Activated naive CD8-positive, alpha-beta T cell treated with anti-CD3 and anti-CD28 coated beads, Interleukin-2, amount 10 ng/mL, durations not matched to agents 7 days and 5 days (primary cell): ENCODE measurements at regions of chr2 and their contacts with region 1.

Region 1: DNA sequence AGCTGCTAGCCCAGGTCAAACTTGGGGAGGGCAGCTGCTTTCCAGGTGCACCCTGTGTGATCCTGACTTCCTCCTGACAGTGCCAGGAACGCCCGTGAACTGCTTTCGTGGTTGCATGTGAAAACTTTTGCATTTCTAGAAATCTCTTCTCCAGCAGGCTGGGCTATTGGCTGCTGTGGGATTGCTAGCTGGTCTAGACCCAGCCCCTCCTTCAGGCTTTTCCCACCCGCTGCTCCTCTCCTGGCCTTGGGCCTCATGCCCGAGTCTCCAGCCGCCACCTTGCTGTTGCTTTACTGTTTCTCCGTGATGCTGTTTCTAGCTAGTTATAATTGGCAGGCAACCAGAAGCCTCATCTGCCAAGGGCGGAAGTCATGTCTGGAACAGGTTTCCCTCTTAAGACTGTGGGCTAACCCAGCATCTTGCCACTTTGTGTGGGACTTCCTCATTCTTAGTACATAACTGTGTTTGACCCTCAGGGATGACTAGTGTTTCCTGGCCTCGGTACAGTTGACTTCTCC is 27.0 kb upstream of the MGAT4A start:
- DNase-seq: peak; percentile 56
- ATAC-seq: peak; percentile 92
- H3K4me3 Mint-ChIP-seq: peak overlapping the region; percentile 81
- H3K27ac Mint-ChIP-seq: peak overlapping the region; percentile 94
- H3K4me1 Mint-ChIP-seq: peaks cover 42% of the 10 kb centered on the region
- H3K27me3 Mint-ChIP-seq: no peaks in the 10 kb centered on the region

Region 2: GRCh38 chr2:98664327-98664726 is 93.6 kb before region 1 on chr2:
- POLR2A ChIA-PET with region 1: interaction called, 10 read pairs
- DNase-seq: no peak
- ATAC-seq: peak; percentile 65
- H3K4me3 Mint-ChIP-seq: peak overlapping the region; percentile 69
- H3K27ac Mint-ChIP-seq: peak overlapping the region; percentile 97
- H3K4me1 Mint-ChIP-seq: peaks cover 55% of the 10 kb centered on the region
- H3K27me3 Mint-ChIP-seq: no peaks in the 10 kb centered on the region

Region 3: DNA sequence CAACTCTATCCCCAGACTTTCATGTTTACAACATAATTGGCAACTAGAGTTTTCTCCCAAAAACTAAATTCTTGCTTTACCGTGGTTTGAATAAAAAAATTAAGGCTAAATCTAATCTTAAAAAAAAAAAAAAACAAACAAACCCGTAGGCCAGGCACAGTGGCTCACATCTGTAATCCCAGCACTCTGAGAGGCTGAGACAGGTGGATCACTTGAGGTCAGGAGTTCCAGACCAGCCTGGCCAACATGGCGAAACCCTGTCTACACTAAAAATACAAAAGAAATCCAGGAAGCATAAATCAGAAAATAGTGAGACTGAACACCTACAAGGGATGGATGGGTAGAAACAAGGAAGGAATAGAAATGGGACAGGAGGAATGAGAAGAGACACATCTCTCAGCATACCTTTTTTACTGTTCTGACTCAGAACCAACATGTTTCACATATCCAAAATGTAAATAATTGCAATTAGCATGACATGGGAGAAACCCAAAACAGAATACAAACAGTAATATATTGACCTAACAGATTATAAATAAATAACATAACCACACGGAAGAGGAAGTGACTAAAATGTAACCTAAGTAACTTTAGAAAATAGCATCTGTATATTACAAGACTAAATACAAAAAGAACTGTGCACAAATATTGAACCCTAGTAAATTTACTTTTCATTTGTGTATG is 44.5 kb before region 1 on chr2:
- POLR2A ChIA-PET with region 1: no interaction called
- DNase-seq: no peak
- ATAC-seq: no peak
- H3K4me3 Mint-ChIP-seq: no peak overlapping the region
- H3K27ac Mint-ChIP-seq: no peak overlapping the region
- H3K4me1 Mint-ChIP-seq: peaks cover 69% of the 10 kb centered on the region
- H3K27me3 Mint-ChIP-seq: no peaks in the 10 kb centered on the region

Region 4: DNA sequence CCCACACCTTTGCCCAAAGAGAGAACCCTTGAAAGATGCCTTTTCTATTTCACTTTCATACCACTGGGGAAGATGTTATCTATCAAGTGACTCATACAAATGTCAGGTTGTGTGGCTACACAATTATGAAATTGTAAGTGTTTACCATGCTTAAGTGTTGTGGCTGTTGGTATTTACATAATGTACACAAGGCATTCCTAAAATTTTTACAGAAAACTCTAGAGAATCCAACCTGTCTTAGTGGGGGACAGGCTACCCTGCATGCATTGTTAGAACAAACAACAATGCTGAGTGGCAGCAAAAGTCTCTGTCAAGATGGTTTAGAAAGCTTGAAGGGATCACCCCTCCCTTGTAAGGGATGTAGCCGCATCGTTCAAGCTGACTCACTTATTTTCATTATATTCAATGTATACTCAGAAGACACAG is 21.5 kb before region 1 on chr2:
- POLR2A ChIA-PET with region 1: interaction called, 10 read pairs
- DNase-seq: no peak
- ATAC-seq: peak; percentile 66
- H3K4me3 Mint-ChIP-seq: peak overlapping the region; percentile 49
- H3K27ac Mint-ChIP-seq: peak overlapping the region; percentile 40
- H3K4me1 Mint-ChIP-seq: peaks cover 55% of the 10 kb centered on the region
- H3K27me3 Mint-ChIP-seq: no peaks in the 10 kb centered on the region